ENCODE measurements at regions of chr19 and their contacts with region 1.

Region 1: GRCh38 chr19:1269065-1269477 is at the start of gene CIRBP:
- DNase-seq: peak; percentile 94

Region 2: DNA sequence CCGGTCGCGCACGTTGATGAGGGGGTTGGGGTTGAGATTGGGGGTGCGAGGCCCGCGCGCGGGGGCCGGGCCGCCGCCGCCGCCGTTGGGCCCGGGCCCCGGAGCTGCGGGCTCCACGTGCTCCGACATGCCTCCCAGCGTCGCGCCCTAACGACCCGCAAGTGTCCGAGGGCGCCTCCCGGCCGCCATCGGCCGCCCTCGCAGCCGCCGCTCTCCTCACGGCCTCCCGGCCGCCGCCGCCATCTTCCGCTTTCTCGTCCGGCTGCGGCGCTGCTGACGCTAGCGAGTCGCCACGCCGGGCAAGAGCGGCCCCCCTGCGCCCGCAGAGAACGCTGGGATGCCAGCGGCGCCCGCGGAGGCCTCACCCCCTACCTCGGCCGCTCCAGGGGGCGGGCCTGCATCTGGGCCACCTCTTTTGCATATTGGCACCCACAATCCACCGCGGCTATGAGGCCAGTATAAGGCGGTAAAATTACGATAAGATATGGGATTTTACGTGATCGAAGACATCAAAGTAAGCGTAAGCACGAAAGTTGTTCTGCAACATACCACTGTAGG is 248.1 kb before region 1 on chr19 and contains the start of gene TMEM259:
- CTCF ChIA-PET with region 1: no interaction called
- POLR2A ChIA-PET with region 1: interaction called, 16 read pairs
- DNase-seq: peak; percentile 96

Region 3: DNA sequence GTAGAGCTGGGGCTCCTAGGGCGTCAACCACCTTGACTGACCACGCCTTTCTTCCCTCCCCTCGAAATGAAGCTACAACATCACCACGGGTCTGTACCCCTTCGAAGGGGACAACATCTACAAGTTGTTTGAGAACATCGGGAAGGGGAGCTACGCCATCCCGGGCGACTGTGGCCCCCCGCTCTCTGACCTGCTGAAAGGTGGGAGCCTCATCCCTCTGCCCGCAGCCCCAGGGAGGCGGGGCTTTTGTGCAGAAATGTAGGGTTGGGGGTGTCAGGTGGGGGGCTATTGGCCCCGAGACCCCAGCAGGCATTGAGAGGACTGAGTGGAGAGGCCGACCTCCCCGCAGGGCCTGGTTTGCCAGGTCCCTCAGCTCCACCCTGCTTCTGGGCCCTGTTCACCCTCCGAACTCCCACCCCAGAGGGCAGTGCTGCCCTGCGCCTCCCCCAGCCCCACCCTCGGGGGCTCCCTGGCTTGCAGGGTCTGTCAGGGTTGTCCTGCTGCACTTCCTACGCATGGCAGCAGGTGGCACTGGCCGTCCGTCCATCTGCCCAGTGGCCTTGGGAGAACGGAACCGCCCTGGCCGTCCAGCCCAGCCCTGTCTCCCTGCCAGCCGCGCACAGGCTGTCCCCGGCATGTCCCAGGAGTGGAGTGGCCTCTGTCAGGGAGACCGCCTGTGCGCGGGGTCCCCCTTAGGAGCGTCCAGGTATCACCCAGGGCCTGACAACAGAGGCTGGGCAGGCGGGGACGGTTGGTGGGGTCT is 47.7 kb before region 1 on chr19:
- CTCF ChIA-PET with region 1: no interaction called
- POLR2A ChIA-PET with region 1: interaction called, 20 read pairs
- DNase-seq: no peak

Region 4: GRCh38 chr19:1255547-1256227 is 13.4 kb before region 1 on chr19:
- CTCF ChIA-PET with region 1: interaction called, 22 read pairs
- POLR2A ChIA-PET with region 1: interaction called, 157 read pairs
- DNase-seq: no peak

Region 5: DNA sequence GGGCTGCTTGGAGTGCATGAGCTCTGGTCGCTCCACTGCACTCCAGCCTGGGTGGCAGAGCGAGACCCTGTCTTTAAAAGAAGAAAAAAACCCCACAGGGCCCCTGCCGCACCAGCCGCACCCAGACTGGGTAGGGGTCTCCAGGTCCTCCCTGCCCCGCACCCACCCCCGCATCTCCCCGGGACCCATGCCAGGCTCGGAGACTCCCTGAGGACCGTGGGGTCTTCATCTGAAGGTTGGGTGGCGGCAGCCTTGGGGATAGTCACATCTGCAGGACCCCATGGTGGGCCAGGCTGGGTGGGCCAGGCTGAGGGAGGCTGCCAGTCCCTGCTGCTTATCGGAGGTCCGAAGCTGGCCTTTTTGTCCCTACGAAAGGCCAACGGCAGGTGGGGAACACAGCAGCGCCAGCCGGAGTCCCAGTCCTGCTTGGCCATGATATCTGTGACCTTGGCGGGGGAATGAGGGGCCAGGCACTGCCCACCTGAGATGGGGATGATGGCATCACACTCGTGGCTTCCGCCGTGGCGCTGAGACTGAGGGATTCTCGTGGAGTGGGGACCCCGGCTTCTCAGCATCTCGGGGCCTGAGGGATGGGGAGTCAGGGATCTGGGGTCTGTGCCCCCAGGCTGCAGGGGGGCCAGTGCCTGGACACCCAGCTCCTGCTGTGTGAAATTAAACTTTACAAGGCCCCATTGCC is 27.7 kb after region 1 on chr19:
- CTCF ChIA-PET with region 1: no interaction called
- POLR2A ChIA-PET with region 1: no interaction called
- DNase-seq: no peak

Region 6: DNA sequence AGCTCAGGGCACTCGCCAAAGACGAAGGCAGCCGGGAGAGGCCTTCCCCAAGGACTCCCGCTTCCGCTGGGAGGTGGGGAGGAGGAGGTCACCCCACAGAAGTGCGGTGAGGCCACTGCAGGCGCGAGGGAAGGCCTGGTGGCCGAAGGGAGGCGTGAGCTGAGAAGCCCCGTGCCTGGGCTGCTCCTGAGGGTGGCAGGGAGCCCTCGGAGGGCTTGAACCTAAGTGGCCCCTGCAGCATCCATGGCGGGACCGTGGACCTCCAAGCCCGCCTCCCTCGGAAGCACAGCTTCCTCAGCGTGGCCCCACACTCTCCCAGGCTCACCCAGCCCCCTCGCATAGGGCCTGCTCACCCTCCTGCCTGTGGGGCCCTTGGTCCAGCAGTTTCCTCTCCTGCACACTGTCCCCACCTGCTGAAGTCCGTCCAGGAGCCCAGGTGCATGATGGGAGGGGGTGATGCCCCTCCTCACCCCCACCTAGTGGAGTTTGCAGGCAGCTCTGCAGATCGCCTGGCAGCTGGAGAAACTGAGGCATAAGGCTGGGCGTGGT is 42.5 kb after region 1 on chr19:
- CTCF ChIA-PET with region 1: no interaction called
- POLR2A ChIA-PET with region 1: interaction called, 12 read pairs
- DNase-seq: no peak

Region 7: DNA sequence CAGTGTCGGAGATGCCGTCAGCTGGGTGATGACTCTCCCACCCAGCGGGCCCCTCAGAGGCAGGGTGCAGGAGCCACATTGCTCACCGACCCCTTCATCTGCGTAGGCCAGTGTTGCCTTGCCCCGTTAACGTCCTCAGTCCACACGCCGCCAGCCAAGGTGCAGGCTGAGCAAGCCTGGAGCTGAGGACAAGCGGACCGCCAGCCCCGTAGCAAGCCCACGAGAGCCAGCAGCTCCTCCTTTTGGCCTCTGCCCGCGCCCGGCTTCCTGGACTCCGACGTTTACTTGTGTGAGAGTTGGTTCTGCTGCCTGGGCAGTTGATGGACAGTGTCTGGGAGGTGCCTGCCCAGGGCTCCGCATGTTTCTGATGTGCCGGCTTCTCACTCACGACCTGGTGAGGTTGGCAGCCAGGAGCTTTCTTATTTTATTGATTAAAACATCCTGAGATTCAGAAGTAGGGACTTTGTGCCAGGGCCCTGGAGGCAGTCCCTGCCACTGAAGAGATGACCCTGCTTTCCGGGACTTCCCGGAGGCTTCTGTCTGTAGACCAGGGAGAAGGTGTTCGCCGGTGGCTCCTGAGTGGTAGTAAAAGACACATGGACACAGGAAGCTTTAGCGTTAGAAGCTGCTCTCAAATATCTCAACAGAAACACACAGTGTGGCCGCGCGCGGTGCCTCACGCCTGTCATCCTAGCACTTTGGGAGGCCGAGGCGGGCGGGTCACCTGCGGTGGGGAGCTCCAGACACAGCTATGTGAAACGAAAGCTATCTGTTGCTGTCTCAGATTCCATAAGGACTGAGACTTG is 144.1 kb after region 1 on chr19:
- CTCF ChIA-PET with region 1: no interaction called
- POLR2A ChIA-PET with region 1: interaction called, 10 read pairs
- DNase-seq: no peak

Measured in HEK293T (cell line).